Activated B cell treated with CpG ODN at 0.5 μM for 24 hours (primary cell): ENCODE measurements at regions of chr19 and their contacts with region 1.

Region 1: GRCh38 chr19:45692187-45693105 is at the start of gene QPCTL:
- DNase-seq: peak; percentile 90
- ATAC-seq: peak; percentile 86
- H3K4me3 Mint-ChIP-seq: peak within 1 kb of the TSS; percentile 94
- H3K27ac Mint-ChIP-seq: peak within 1 kb of the TSS; percentile 98
- H3K4me1 Mint-ChIP-seq: peaks cover 30% of the 10 kb centered on the region
- H3K27me3 Mint-ChIP-seq: no peaks in the 10 kb centered on the region
- CTCF ChIP-seq: no peak
- total RNA-seq, gene QPCTL: 19.3 and 21.1 TPM in 2 replicates

Region 2: DNA sequence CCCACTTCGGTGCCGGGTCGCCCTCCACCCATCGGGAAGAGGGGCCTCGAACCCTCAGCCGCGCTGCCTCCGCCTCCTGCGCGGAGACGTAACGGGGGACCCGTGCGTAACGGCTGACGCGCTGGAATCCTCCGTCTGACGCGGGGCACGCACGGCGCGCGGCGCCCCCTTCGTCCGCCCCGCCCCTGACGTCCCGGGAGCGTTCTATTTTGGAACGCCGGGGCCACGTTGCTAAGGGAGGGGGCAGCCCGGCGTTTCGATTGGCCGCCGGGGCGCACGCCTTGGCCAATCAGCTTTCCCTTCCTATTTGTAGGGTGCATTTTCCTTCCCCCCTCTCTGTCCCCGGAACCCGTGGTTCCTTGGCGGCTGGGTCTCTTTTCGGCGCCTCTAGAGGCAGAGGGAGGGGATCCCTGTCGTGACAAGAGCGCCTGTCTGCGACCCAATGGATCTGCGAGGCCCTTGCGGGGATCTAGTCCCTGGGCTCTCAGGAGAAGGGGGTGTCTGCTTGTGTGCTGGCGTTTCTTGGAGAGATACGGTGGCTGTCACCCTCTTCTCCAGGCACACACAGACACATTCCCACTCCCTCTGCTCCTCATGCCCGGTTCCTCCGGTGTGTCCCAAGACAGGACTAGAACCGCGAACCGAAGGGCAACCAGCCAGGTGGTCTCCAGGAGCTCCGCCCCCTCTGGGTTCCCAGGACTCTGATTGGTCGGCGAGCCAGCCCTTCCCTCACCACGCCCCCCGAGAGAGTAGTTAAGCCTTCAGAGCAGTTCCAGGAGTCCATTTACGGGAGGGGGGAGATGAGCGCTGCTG is 223.1 kb before region 1 on chr19:
- CTCF ChIA-PET with region 1: no interaction called
- POLR2A ChIA-PET with region 1: interaction called, 14 read pairs
- intact Hi-C with region 1: no loop called
- DNase-seq: peak; percentile 92
- ATAC-seq: peak; percentile 52
- H3K4me3 Mint-ChIP-seq: peak overlapping the region; percentile 92
- H3K27ac Mint-ChIP-seq: peak overlapping the region; percentile 98
- H3K4me1 Mint-ChIP-seq: peaks cover 57% of the 10 kb centered on the region
- H3K27me3 Mint-ChIP-seq: peaks cover 16% of the 10 kb centered on the region
- CTCF ChIP-seq: no peak

Region 3: DNA sequence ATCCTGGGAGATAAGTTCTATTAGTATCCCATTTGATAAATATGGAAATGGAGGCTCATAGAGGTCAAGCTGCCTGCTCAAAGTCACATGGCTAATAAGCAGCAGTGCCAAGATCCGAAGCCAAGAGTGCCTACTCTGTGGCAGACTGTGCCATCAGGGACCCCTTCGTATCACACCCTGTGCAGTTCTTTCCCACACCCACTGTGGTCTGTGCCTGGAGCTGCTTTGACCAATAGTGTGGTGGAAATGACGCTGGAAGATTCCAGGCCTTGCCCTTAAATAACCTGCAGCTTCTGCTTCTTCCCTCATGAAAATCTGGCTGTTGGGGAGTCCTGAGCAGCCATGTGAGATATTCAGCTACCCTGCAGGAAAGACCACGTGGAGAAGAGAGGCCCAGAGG is 117.9 kb before region 1 on chr19:
- CTCF ChIA-PET with region 1: no interaction called
- POLR2A ChIA-PET with region 1: no interaction called
- intact Hi-C with region 1: no loop called
- DNase-seq: no peak
- ATAC-seq: no peak
- H3K4me3 Mint-ChIP-seq: no peak overlapping the region
- H3K27ac Mint-ChIP-seq: no peak overlapping the region
- H3K4me1 Mint-ChIP-seq: peaks cover 7% of the 10 kb centered on the region
- H3K27me3 Mint-ChIP-seq: no peaks in the 10 kb centered on the region
- CTCF ChIP-seq: no peak

Region 4: GRCh38 chr19:45584332-45585157 is 107.9 kb before region 1 on chr19 and contains the start of gene OPA3:
- CTCF ChIA-PET with region 1: interaction called, 3 read pairs
- POLR2A ChIA-PET with region 1: interaction called, 18 read pairs
- intact Hi-C with region 1: loop called (anchors 1 kb)
- DNase-seq: peak; percentile 94
- ATAC-seq: peak; percentile 89
- H3K4me3 Mint-ChIP-seq: peak within 1 kb of the TSS; percentile 96
- H3K27ac Mint-ChIP-seq: peak within 1 kb of the TSS; percentile 98
- H3K4me1 Mint-ChIP-seq: peaks cover 13% of the 10 kb centered on the region
- H3K27me3 Mint-ChIP-seq: peaks cover 5% of the 10 kb centered on the region
- CTCF ChIP-seq: no peak
- total RNA-seq, gene OPA3: 12.0 and 14.4 TPM in 2 replicates

Region 5: DNA sequence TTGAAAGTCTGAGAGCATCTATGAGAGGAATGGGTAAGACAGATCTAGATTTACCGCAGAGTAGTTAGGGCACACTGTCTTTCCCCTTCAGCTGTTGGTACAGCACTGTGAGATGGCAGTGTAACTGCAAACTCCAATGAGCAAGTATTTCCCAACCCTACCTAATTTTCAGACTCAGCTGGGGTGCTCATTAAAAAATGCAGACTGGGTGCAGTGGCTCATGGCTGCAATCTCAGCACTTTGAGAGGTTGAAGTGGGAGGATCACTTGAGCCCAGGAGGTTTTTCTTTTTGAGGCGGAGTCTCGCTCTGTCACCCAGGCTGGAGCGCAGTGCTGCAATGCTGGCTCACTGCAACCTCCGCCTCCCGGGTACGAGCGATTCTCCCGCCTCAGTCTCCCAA is 12.7 kb after region 1 on chr19:
- CTCF ChIA-PET with region 1: interaction called, 36 read pairs
- POLR2A ChIA-PET with region 1: interaction called, 29 read pairs
- intact Hi-C with region 1: loop called (anchors 1 kb)
- DNase-seq: no peak
- ATAC-seq: no peak
- H3K4me3 Mint-ChIP-seq: no peak overlapping the region
- H3K27ac Mint-ChIP-seq: no peak overlapping the region
- H3K4me1 Mint-ChIP-seq: peaks cover 31% of the 10 kb centered on the region
- H3K27me3 Mint-ChIP-seq: no peaks in the 10 kb centered on the region
- CTCF ChIP-seq: no peak

Region 6: GRCh38 chr19:45730389-45731288 is 38.2 kb after region 1 on chr19 and contains the start of gene FBXO46:
- CTCF ChIA-PET with region 1: interaction called, 9 read pairs
- POLR2A ChIA-PET with region 1: interaction called, 38 read pairs
- intact Hi-C with region 1: loop called (anchors 1 kb)
- DNase-seq: peak; percentile 86
- ATAC-seq: peak; percentile 98
- H3K4me3 Mint-ChIP-seq: peak within 1 kb of the TSS; percentile 95
- H3K27ac Mint-ChIP-seq: peak within 1 kb of the TSS; percentile 93
- H3K4me1 Mint-ChIP-seq: peaks cover 25% of the 10 kb centered on the region
- H3K27me3 Mint-ChIP-seq: no peaks in the 10 kb centered on the region
- CTCF ChIP-seq: no peak
- total RNA-seq, gene FBXO46: 36.3 and 44.0 TPM in 2 replicates

Region 7: DNA sequence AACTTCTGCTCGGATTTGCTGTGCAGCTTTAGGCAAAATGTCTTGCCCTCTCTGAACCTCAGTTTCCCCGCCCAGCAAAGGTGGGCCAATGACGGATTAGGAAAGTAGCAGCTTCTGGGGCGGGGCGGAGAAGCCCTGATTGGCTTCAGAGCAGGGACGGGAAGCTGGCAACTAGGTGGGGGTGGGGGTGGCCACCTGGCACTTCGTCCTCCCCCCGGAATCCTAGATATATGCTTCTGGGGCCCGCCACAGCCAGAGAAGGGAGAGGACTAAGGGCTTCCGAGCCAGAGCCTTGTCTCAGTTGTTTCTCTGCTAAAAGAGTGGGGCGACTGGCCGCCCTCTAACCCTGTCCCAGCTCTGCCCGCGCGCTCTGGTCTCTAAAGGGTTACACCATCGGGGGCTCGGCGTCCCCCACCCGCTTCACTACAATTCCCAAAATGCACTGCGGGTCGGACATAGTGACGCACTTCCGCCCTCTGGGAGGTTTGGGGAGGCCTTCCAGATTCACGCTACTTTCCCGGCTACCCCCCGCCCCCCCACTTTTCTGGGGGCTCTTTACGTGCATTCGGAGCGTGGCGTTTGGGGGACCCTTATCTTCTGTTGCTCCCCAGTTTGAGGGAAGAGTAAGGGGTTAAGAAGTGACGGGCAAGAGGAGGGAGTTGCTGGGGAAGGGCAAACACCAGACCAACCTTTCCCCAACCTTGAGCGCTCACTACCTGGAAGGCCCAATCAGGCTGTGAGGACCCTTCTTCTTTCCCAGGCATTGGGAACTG is 194.2 kb after region 1 on chr19:
- CTCF ChIA-PET with region 1: no interaction called
- POLR2A ChIA-PET with region 1: interaction called, 5 read pairs
- intact Hi-C with region 1: loop called (anchors 1 kb)
- DNase-seq: peak; percentile 86
- ATAC-seq: peak; percentile 65
- H3K4me3 Mint-ChIP-seq: peak overlapping the region; percentile 92
- H3K27ac Mint-ChIP-seq: peak overlapping the region; percentile 94
- H3K4me1 Mint-ChIP-seq: peaks cover 30% of the 10 kb centered on the region
- H3K27me3 Mint-ChIP-seq: no peaks in the 10 kb centered on the region
- CTCF ChIP-seq: no peak